Sigmoid colon (tissue), 7 donors: ENCODE measurements at regions of chr15 and their contacts with region 1.

Region 1: DNA sequence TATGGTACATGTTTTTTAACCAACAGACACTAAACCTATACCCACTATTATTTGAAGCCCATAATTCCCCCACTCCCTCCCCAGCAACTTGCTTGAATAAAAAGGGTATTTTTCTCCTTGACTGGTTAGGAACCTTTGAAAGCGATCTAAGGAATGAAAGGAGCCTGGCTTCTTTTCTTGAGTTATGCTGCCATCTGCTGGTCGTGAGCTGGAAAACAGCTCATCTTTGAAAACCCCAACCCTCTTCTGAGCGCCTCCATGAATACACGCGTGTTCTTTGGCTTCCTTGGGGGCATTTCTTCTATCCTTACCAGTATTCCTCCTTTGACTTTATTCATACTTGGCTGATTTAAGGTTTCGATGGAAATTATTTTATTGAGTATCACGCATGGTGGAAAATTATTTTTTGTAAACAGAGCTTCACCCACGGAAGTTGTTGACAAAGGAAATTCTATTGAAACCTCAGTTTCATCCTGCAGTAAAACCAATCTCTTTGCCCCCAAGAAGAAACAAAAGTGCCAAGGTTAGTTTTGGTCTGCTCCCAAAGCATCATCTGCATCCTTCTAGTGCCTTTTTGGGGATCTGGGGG is 171.6 kb downstream of the SV2B start:
- DNase-seq: no peak
- H3K4me3 ChIP-seq: no peak overlapping the region
- H3K27ac ChIP-seq: no peak overlapping the region
- H3K4me1 ChIP-seq: no peaks in the 10 kb centered on the region
- H3K27me3 ChIP-seq: peaks cover 0 to 4% (median 3%) of the 10 kb centered on the region in 3 donors
- CTCF ChIP-seq: peak; percentile 63 to 77 (median 72)
- EP300 ChIP-seq: no peak
- POLR2A ChIP-seq: no peak

Region 2: GRCh38 chr15:90954712-90955671 is 316.7 kb before region 1 on chr15 and contains the start of gene RCCD1:
- intact Hi-C with region 1: loop called (anchors 5 kb)
- DNase-seq: peak; percentile 99
- H3K4me3 ChIP-seq: peak within 1 kb of the TSS; percentile 81 to 93 (median 88)
- H3K27ac ChIP-seq: peak within 1 kb of the TSS; percentile 95 to 99 (median 96)
- H3K4me1 ChIP-seq: peaks cover 0 to 48% (median 41%) of the 10 kb centered on the region in 4 donors
- H3K27me3 ChIP-seq: no peaks in the 10 kb centered on the region
- CTCF ChIP-seq: no peak
- EP300 ChIP-seq: no peak
- POLR2A ChIP-seq: peak; percentile 17 to 36
- total RNA-seq, gene RCCD1: 5.2 to 8.0 (median 6.7) TPM

Region 3: GRCh38 chr15:91055548-91056331 is 215.9 kb before region 1 on chr15:
- intact Hi-C with region 1: loop called (anchors 1 kb)
- DNase-seq: peak; percentile 72
- H3K4me3 ChIP-seq: no peak overlapping the region
- H3K27ac ChIP-seq: no peak overlapping the region
- H3K4me1 ChIP-seq: peaks cover 0 to 4% (median 0%) of the 10 kb centered on the region in 4 donors
- H3K27me3 ChIP-seq: peaks cover 0 to 53% (median 0%) of the 10 kb centered on the region in 3 donors
- CTCF ChIP-seq: peak; percentile 43 to 71 (median 57)
- EP300 ChIP-seq: no peak
- POLR2A ChIP-seq: no peak

Region 4: DNA sequence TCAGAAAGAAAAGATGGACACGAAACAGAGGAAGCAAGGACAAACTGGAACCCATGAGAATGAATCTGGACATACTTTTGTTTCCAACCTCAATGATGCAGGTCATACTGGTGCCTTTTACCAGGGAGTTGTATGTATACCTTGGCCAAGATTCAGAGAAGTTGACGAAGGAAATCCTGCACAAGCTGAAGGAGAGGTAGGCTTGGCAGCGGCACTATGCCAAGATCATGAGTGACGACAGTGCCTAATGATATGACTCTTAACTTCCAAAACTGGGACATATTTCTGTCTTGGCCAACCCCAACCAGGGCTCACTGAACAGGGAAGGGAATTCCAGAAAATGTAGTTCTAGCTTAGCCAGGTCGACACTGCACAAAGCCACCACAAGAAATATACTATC is 432.7 kb after region 1 on chr15:
- intact Hi-C with region 1: no loop called
- DNase-seq: no peak
- H3K4me3 ChIP-seq: no peak overlapping the region
- H3K27ac ChIP-seq: no peak overlapping the region
- H3K4me1 ChIP-seq: no peaks in the 10 kb centered on the region
- H3K27me3 ChIP-seq: no peaks in the 10 kb centered on the region
- CTCF ChIP-seq: no peak
- EP300 ChIP-seq: no peak
- POLR2A ChIP-seq: no peak